HepG2 (cell line): ENCODE measurements at regions of chr6 and their contacts with region 1.

Region 1: DNA sequence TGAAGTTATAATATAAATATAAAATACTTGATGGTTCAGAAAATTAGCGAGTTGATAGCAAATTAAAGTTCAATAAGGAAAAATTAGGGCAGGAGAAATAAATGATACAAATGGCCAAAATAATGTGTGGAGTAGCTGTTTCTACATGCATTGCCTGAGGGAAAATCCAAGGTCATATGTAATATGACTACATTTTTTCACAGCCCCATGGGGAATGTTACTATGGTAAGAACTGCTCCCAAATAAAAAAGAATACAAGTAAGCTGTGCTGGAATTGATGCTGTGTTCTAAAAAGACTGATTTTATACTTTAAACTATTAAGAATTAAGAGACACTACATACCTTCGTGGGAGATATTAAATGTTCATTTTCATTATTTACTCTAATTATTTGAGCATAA is 34.1 kb downstream of the MEI4 start:
- DNase-seq: no peak
- ATAC-seq: no peak
- H3K4me3 ChIP-seq: no peak overlapping the region
- H3K27ac ChIP-seq: no peak overlapping the region
- H3K4me1 ChIP-seq: no peaks in the 10 kb centered on the region
- H3K27me3 ChIP-seq: no peaks in the 10 kb centered on the region
- CTCF ChIP-seq: no peak
- EP300 ChIP-seq: no peak
- POLR2A ChIP-seq: no peak
- RAD21 ChIP-seq: no peak

Region 2: GRCh38 chr6:77707603-77708002 is 20.7 kb after region 1 on chr6:
- CTCF ChIA-PET with region 1: no interaction called
- POLR2A ChIA-PET with region 1: no interaction called
- in situ Hi-C with region 1: no loop called
- intact Hi-C with region 1: no loop called
- DNase-seq: no peak
- ATAC-seq: peak; percentile 60
- H3K4me3 ChIP-seq: no peak overlapping the region
- H3K27ac ChIP-seq: no peak overlapping the region
- H3K4me1 ChIP-seq: no peaks in the 10 kb centered on the region
- H3K27me3 ChIP-seq: no peaks in the 10 kb centered on the region
- CTCF ChIP-seq: peak; percentile 17; the same call in 1 of the 2 replicates
- EP300 ChIP-seq: no peak
- POLR2A ChIP-seq: no peak
- RAD21 ChIP-seq: no peak

Region 3: GRCh38 chr6:77814119-77814518 is 127.2 kb after region 1 on chr6:
- CTCF ChIA-PET with region 1: no interaction called
- POLR2A ChIA-PET with region 1: no interaction called
- in situ Hi-C with region 1: no loop called
- intact Hi-C with region 1: no loop called
- DNase-seq: no peak
- ATAC-seq: no peak
- H3K4me3 ChIP-seq: no peak overlapping the region
- H3K27ac ChIP-seq: no peak overlapping the region
- H3K4me1 ChIP-seq: peaks cover 25% of the 10 kb centered on the region
- H3K27me3 ChIP-seq: no peaks in the 10 kb centered on the region
- CTCF ChIP-seq: no peak
- EP300 ChIP-seq: no peak
- POLR2A ChIP-seq: no peak
- RAD21 ChIP-seq: no peak

Region 4: GRCh38 chr6:77857421-77857820 is 170.5 kb after region 1 on chr6:
- CTCF ChIA-PET with region 1: no interaction called
- POLR2A ChIA-PET with region 1: no interaction called
- in situ Hi-C with region 1: no loop called
- intact Hi-C with region 1: no loop called
- DNase-seq: no peak
- ATAC-seq: no peak
- H3K4me3 ChIP-seq: no peak overlapping the region
- H3K27ac ChIP-seq: no peak overlapping the region
- H3K4me1 ChIP-seq: no peaks in the 10 kb centered on the region
- H3K27me3 ChIP-seq: no peaks in the 10 kb centered on the region
- CTCF ChIP-seq: no peak
- EP300 ChIP-seq: no peak
- POLR2A ChIP-seq: no peak
- RAD21 ChIP-seq: no peak

Region 5: GRCh38 chr6:79335133-79335674 is 1648.3 kb after region 1 on chr6:
- CTCF ChIA-PET with region 1: no interaction called
- POLR2A ChIA-PET with region 1: no interaction called
- in situ Hi-C with region 1: no loop called
- intact Hi-C with region 1: loop called (anchors 10 kb)
- DNase-seq: no peak
- ATAC-seq: no peak
- H3K4me3 ChIP-seq: no peak overlapping the region
- H3K27ac ChIP-seq: no peak overlapping the region
- H3K4me1 ChIP-seq: no peaks in the 10 kb centered on the region
- H3K27me3 ChIP-seq: no peaks in the 10 kb centered on the region; a peak in 2 of 5 replicates
- CTCF ChIP-seq: no peak
- EP300 ChIP-seq: no peak
- POLR2A ChIP-seq: no peak
- RAD21 ChIP-seq: no peak